Endothelial cell of umbilical vein (primary cell): ENCODE measurements at regions of chr20 and their contacts with region 1.

Region 1: GRCh38 chr20:40990542-40991120 is 38.0 kb upstream of the TOP1 start:
- DNase-seq: peak; percentile 89
- H3K4me3 ChIP-seq: no peak overlapping the region
- H3K27ac ChIP-seq: no peak overlapping the region
- H3K4me1 ChIP-seq: peaks cover 16% of the 10 kb centered on the region
- H3K27me3 ChIP-seq: no peaks in the 10 kb centered on the region
- CTCF ChIP-seq: peak; percentile 88 to 89
- POLR2A ChIP-seq: no peak

Region 2: GRCh38 chr20:40843251-40843650 is 147.4 kb before region 1 on chr20:
- CTCF ChIA-PET with region 1: no interaction called
- POLR2A ChIA-PET with region 1: no interaction called
- dilution Hi-C with region 1: no loop called
- intact Hi-C with region 1: no loop called
- DNase-seq: no peak
- H3K4me3 ChIP-seq: no peak overlapping the region
- H3K27ac ChIP-seq: no peak overlapping the region
- H3K4me1 ChIP-seq: no peaks in the 10 kb centered on the region
- H3K27me3 ChIP-seq: no peaks in the 10 kb centered on the region
- CTCF ChIP-seq: no peak
- POLR2A ChIP-seq: no peak

Region 3: GRCh38 chr20:40970201-40970600 is 20.4 kb before region 1 on chr20:
- CTCF ChIA-PET with region 1: interaction called, 33 read pairs
- POLR2A ChIA-PET with region 1: no interaction called
- dilution Hi-C with region 1: no loop called
- intact Hi-C with region 1: loop called (anchors 1 kb)
- DNase-seq: no peak
- H3K4me3 ChIP-seq: no peak overlapping the region
- H3K27ac ChIP-seq: no peak overlapping the region
- H3K4me1 ChIP-seq: no peaks in the 10 kb centered on the region
- H3K27me3 ChIP-seq: no peaks in the 10 kb centered on the region
- CTCF ChIP-seq: peak in 1 of 2 donors; percentile 16
- POLR2A ChIP-seq: no peak

Region 4: DNA sequence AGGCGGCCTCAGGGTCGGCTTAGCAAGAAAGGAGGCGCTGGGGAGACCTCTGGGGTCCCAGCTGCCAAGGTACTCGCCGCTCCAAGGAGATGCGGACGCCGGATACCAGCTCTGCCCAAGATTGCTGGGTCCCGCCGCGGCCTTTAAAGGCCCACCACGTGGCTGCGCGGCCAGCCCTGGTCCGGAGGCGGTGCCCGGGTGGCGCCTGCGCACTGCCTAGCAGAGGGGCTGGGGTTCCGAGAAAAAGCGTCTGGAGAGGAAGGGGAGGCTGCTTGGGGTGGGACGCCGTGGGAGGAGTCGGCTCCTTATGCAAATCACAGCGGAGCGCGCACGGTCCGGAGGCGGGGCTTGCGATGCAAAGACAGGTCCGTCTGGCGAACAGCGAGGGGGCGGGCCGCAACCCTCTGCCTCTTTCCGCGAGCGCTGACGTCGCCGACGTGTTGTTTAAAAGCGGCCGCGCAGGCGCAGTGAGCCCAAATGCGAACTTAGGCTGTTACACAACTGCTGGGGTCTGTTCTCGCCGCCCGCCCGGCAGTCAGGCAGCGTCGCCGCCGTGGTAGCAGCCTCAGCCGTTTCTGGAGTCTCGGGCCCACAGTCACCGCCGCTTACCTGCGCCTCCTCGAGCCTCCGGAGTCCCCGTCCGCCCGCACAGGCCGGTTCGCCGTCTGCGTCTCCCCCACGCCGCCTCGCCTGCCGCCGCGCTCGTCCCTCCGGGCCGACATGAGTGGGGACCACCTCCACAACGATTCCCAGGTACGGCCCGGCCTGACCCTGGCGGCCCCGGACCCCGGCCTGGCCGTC is 37.9 kb after region 1 on chr20 and contains the start of gene TOP1:
- CTCF ChIA-PET with region 1: interaction called, 87 read pairs
- POLR2A ChIA-PET with region 1: interaction called, 12 read pairs
- dilution Hi-C with region 1: no loop called
- intact Hi-C with region 1: loop called (anchors 1 kb)
- DNase-seq: peak; percentile 100
- H3K4me3 ChIP-seq: peak within 1 kb of the TSS; percentile 83 to 98 (median 96)
- H3K27ac ChIP-seq: peak within 1 kb of the TSS; percentile 98
- H3K4me1 ChIP-seq: peaks cover 38% of the 10 kb centered on the region
- H3K27me3 ChIP-seq: no peaks in the 10 kb centered on the region
- CTCF ChIP-seq: no peak
- POLR2A ChIP-seq: peak; percentile 97
- total RNA-seq, gene TOP1: 75.1 and 77.4 TPM in 2 replicates

Region 5: DNA sequence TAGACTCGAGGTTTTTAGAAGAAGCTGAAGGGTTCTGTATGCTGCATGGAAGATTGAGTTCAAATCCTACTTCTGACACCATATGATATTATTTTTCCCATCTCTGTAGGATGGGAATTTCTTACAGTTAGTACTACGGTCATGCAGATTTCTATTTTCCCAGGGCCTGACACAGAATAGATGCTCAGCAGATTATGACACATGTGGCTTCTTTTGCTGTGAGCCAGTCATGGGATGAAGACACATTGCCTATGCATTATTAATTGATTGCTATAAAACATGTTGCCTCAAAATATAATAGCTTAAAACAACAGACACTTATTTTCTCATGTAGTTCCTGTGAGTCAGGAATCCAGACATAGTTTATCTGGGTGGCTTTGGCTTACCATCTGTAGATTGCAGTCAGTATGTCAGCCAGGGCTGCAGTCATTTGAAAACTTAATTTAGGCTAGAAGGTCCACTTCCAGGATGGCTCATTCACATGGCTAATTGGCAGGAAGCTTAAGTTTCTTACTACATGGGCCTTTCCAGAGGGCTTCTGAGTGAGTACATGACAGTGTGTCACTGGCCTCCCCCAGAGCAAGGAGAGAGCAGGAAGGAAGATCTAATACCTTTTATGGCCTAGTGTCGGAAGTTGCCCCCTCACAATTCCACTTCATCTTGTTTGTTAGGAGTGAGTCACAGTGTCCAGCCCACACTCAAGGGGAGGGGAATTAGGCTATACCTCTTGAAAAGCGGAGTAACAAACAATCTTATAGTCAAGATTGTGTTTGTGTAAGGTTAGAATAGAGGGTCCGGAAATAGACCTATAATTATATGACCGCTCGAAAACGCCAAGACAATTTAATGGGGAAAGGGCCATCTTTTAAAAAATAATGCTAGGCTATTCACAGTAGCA is 67.6 kb after region 1 on chr20:
- CTCF ChIA-PET with region 1: interaction called, 84 read pairs
- POLR2A ChIA-PET with region 1: no interaction called
- dilution Hi-C with region 1: no loop called
- intact Hi-C with region 1: loop called (anchors 1 kb)
- DNase-seq: peak; percentile 71
- H3K4me3 ChIP-seq: no peak overlapping the region
- H3K27ac ChIP-seq: peak overlapping the region; percentile 30
- H3K4me1 ChIP-seq: peaks cover 30% of the 10 kb centered on the region
- H3K27me3 ChIP-seq: no peaks in the 10 kb centered on the region
- CTCF ChIP-seq: no peak
- POLR2A ChIP-seq: no peak

Region 6: GRCh38 chr20:41078329-41078728 is 87.7 kb after region 1 on chr20:
- CTCF ChIA-PET with region 1: interaction called, 228 read pairs
- POLR2A ChIA-PET with region 1: interaction called, 7 read pairs
- dilution Hi-C with region 1: no loop called
- intact Hi-C with region 1: loop called (anchors 1 kb)
- DNase-seq: peak; percentile 86
- H3K4me3 ChIP-seq: no peak overlapping the region
- H3K27ac ChIP-seq: no peak overlapping the region
- H3K4me1 ChIP-seq: peaks cover 64% of the 10 kb centered on the region
- H3K27me3 ChIP-seq: no peaks in the 10 kb centered on the region
- CTCF ChIP-seq: peak; percentile 49 to 52
- POLR2A ChIP-seq: peak; percentile 52

Region 7: DNA sequence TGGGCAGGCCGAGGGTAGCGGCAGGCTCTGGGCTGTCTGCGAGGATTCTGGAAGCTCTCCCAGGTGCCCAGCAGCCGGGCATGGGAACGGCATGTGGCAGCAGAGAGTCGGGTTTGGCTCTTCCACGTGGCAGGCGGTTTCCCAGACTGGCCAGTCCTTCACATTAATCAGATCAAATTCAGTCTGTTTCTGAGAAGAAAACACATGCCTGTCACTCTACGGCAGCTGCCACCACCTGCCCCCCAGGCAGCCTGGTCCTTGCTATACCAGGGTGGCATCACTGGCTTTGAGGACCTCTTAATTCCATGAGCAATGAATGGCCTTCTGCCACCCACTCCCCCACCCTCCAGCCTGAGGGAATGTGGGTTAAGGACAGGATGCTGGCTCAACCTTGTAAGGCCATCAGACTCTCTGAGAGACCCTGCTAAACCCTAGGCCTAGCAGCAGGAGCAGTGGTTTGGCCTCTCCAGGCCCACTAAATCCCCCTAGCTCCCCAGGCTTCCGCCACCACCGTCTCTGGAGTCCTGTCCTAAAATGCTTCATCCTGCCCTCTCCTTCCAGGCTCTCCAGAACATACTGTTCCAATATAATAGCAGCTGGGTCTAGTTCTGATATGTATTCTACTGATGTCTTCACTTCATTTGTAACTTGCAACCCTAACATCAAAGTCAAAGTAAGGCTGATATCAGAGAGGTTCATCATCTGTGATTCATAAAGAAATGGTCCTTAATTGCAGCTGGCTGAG is 194.6 kb after region 1 on chr20:
- CTCF ChIA-PET with region 1: no interaction called
- POLR2A ChIA-PET with region 1: no interaction called
- dilution Hi-C with region 1: no loop called
- intact Hi-C with region 1: no loop called
- DNase-seq: no peak
- H3K4me3 ChIP-seq: no peak overlapping the region
- H3K27ac ChIP-seq: no peak overlapping the region
- H3K4me1 ChIP-seq: no peaks in the 10 kb centered on the region
- H3K27me3 ChIP-seq: no peaks in the 10 kb centered on the region
- CTCF ChIP-seq: no peak
- POLR2A ChIP-seq: no peak